ENCODE measurements at regions of chr3 and their contacts with region 1.

Region 1: DNA sequence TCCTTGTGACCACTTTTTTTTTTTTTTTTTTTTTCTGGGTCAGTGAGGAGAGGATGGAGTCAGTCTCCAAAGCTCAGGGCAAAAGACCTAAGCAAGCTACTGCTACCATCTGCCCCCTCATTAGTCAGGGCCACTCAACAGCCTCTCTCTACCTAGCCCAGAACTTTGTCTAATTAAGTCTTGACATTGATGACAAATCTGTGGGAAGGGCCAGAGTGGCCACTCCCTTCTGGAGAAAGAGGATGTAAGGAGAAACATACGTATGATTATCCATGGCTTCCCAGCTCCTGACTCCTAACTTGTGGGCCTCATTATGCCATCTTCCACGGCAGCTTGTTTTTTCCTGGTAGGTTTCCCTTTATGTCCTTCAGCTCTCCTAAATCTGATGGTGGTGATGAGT is 37.9 kb downstream of the NR1I2 start:
- DNase-seq: no peak
- H3K4me3 ChIP-seq: no peak overlapping the region
- CTCF ChIP-seq: no peak

Region 2: GRCh38 chr3:119140466-119140865 is 679.3 kb before region 1 on chr3:
- CTCF ChIA-PET with region 1: no interaction called
- POLR2A ChIA-PET with region 1: no interaction called
- DNase-seq: no peak
- H3K4me3 ChIP-seq: no peak overlapping the region
- CTCF ChIP-seq: no peak

Region 3: DNA sequence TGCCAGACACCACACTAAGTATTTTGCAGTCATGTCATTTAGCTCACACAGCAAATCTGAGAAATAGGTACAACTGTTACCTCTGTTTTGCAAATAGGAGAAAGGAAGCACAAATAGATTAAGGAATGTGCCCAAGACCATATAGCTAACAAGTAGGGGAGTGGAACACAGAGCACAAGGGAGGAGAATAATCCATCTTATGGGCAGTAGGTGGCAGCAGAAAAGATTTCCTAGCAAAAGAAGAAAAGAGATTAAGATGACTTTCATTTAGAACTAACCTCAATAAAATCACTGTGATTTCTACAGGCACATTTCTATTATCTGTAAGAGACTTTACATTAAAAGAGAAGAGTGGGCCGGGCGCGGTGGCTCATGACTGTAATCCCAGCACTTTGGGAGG is 11.2 kb after region 1 on chr3:
- CTCF ChIA-PET with region 1: interaction called, 11 read pairs
- POLR2A ChIA-PET with region 1: no interaction called
- DNase-seq: no peak
- H3K4me3 ChIP-seq: no peak overlapping the region
- CTCF ChIP-seq: peak; percentile 9

Measured in AG04449 (cell line).